ENCODE measurements at regions of chr1 and their contacts with region 1.

Region 1: GRCh38 chr1:45303582-45304310 is 22.9 kb upstream of the HPDL start:
- DNase-seq: peak; percentile 93 to 100 (median 98)

Region 2: GRCh38 chr1:44730741-44731512 is 572.8 kb before region 1 on chr1 and contains the start of gene RNU5D-1:
- intact Hi-C with region 1: loop called (anchors 10 kb)
- DNase-seq: peak; percentile 86 to 99 (median 96)

Region 3: GRCh38 chr1:44835738-44836675 is 467.7 kb before region 1 on chr1:
- intact Hi-C with region 1: loop called (anchors 10 kb)
- DNase-seq: peak; percentile 68 to 94 (median 88)